PC-9 (cell line): ENCODE measurements at regions of chr17 and their contacts with region 1.

Region 1: DNA sequence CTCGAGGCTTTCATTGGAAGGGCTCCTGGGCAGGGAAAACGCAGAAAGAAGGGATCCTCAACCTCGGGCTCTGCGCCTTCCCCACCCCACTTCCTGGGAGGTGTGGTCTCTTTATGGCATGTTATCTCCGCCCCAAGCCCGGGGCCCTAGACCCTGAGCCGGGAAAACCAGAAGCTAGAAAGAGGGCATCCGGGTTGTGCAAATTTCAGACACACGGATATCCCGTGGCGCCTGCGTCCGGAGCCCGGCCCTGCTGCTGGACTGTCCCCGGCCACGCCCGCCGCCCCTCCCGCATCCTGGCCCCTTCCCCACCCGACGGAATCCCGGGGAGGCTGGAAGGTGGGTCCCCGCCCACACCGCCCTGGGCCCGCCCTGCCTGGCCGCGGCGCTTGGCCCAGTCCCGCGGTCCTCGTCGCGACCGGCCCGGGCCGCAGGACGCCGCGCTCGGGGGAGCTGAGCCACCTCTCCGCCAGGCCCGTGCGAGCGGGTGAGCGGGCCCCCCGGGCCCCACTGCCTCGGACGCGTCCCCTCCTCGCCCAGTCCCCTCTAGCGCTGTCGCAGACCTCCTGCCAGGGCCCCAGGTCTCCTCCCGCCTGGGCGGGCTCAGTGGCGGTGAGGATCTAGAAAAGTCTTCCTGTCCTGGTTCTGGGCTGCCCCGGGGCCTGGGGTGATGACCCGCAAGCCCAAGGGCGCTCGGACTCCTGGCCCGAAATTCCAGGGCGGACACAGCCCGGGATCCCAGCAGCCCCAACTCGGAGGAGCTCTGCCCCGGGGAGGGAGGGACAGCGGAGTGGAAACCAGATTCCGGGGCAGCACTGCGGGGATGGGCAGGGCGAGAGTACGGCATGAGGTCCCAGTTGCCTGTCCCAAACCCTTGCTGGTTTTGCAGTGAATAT is at the start of gene SLC16A5:
- DNase-seq: peak; percentile 93 to 98
- H3K4me3 ChIP-seq: peak within 1 kb of the TSS; percentile 93
- H3K27ac ChIP-seq: peak within 1 kb of the TSS; percentile 91
- H3K4me1 ChIP-seq: peaks cover 84% of the 10 kb centered on the region
- H3K27me3 ChIP-seq: no peaks in the 10 kb centered on the region
- CTCF ChIP-seq: no peak
- total RNA-seq, gene SLC16A5: 70.2 and 88.5 TPM in 2 replicates

Region 2: DNA sequence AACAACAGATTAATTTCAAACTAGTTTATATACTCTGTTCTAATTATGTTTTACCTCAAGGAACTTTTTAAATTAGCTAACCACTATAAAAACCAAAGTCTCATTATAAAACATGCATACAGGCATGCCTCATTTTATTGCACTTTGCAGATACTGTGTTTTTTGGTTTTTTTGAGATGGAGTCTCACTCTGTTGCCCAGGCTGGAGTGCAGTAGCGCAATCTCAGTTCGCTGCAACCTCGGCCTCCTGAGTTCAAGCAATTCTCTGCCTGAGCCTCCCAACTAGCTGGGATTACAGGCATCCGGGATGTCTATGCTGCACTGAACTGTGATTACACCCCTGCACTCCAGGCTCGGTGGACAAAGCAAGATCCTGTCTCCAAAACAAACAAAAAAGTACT is 75.3 kb after region 1 on chr17:
- CTCF ChIA-PET with region 1: interaction called, 12 read pairs
- POLR2A ChIA-PET with region 1: no interaction called
- intact Hi-C with region 1: loop called (anchors 1 kb)
- DNase-seq: no peak
- H3K4me3 ChIP-seq: no peak overlapping the region
- H3K27ac ChIP-seq: no peak overlapping the region
- H3K4me1 ChIP-seq: peaks cover 29% of the 10 kb centered on the region
- H3K27me3 ChIP-seq: no peaks in the 10 kb centered on the region
- CTCF ChIP-seq: no peak

Region 3: DNA sequence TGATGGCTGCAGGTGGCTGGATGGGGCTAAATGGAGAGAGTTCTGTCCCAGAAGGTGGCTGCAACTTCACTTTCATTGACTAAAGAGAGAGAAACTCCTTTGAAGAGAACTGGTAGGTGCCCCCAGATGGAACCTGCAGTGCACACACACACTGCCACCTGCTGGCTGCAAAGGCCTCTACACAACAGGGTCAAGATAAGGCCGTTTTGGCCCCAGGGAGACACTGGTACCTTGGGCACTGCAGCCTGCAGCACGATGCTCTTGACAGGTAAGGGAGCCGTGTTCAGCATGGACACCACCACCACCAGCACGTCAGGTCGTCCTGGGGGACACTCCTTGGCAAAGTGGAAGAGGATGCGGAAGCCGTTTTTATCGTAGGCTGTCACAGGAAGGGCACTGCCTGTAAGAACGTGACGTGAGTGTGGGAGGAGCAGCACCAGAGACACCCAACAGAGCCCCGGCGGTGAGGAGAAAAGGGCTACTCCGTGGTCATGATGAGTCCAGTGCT is 150.9 kb after region 1 on chr17:
- CTCF ChIA-PET with region 1: no interaction called
- POLR2A ChIA-PET with region 1: no interaction called
- intact Hi-C with region 1: no loop called
- DNase-seq: peak; percentile 48 to 59
- H3K4me3 ChIP-seq: no peak overlapping the region
- H3K27ac ChIP-seq: no peak overlapping the region
- H3K4me1 ChIP-seq: no peaks in the 10 kb centered on the region
- H3K27me3 ChIP-seq: no peaks in the 10 kb centered on the region
- CTCF ChIP-seq: peak; percentile 87